ENCODE measurements at regions of chr11 and their contacts with region 1.

Region 1: GRCh38 chr11:68383976-68384501 is 71.6 kb downstream of the LRP5 start:
- DNase-seq: peak; percentile 64
- ATAC-seq: peak; percentile 45
- H3K4me3 Mint-ChIP-seq: no peak overlapping the region
- H3K27ac Mint-ChIP-seq: no peak overlapping the region
- H3K4me1 Mint-ChIP-seq: peaks cover 45% of the 10 kb centered on the region
- H3K27me3 Mint-ChIP-seq: no peaks in the 10 kb centered on the region
- CTCF ChIP-seq: peak; percentile 50

Region 2: DNA sequence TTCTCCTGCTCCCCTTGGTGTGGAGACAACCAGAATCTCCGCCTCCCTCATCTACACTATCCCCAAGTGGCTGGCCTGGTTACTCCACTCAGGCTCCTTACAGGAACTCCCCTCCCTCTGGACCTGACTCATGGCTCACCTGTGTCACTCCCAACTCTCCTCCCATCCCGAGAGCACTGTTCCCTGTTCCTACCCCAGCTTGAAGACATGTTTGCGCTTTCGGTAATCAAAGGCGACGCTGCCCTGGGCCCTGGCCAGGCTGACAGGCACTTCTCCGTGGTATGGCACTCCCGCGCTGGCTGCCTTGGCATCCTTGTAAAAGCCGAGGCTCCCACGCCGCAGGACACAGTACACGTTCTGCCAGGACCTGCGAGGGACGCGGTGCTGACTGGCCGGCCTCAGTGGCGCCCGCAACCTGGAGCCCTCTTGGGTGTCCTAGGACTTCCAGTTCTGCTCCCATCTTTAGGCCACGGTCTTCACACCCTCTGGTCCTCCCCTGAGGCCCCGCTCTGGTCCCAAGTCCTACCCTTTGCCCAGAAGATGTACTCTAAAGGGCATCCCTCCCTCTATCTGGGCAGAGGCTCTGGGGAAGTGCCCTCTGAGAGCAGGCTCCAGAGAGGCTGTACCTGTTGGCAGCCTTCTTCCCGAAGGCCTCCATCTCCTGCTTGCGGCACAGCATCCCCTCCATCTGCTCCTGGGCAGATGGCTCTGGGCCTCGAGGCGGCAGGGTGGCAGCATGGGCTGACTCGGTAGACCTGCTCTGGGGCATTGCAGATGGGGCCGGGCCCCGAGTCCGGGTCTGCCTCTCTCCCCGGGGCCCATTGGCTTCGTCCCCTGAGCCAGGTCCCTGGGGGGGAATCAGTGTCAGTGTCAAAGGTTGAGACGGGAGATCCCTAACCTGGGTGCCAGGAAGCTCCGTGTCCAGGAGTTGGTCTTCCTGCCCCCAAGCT is 1697.0 kb before region 1 on chr11:
- CTCF ChIA-PET with region 1: no interaction called
- POLR2A ChIA-PET with region 1: no interaction called
- intact Hi-C with region 1: no loop called
- DNase-seq: no peak
- ATAC-seq: no peak
- H3K4me3 Mint-ChIP-seq: no peak overlapping the region
- H3K27ac Mint-ChIP-seq: no peak overlapping the region
- H3K4me1 Mint-ChIP-seq: no peaks in the 10 kb centered on the region
- H3K27me3 Mint-ChIP-seq: no peaks in the 10 kb centered on the region
- CTCF ChIP-seq: no peak

Region 3: GRCh38 chr11:68257475-68258362 is 126.3 kb before region 1 on chr11:
- CTCF ChIA-PET with region 1: interaction called, 8 read pairs
- POLR2A ChIA-PET with region 1: interaction called, 4 read pairs
- intact Hi-C with region 1: loop called (anchors 1 kb)
- DNase-seq: peak; percentile 90
- ATAC-seq: peak; percentile 94
- H3K4me3 Mint-ChIP-seq: peak overlapping the region; percentile 52
- H3K27ac Mint-ChIP-seq: peak overlapping the region; percentile 80
- H3K4me1 Mint-ChIP-seq: peaks cover 20% of the 10 kb centered on the region
- H3K27me3 Mint-ChIP-seq: no peaks in the 10 kb centered on the region
- CTCF ChIP-seq: no peak

Region 4: DNA sequence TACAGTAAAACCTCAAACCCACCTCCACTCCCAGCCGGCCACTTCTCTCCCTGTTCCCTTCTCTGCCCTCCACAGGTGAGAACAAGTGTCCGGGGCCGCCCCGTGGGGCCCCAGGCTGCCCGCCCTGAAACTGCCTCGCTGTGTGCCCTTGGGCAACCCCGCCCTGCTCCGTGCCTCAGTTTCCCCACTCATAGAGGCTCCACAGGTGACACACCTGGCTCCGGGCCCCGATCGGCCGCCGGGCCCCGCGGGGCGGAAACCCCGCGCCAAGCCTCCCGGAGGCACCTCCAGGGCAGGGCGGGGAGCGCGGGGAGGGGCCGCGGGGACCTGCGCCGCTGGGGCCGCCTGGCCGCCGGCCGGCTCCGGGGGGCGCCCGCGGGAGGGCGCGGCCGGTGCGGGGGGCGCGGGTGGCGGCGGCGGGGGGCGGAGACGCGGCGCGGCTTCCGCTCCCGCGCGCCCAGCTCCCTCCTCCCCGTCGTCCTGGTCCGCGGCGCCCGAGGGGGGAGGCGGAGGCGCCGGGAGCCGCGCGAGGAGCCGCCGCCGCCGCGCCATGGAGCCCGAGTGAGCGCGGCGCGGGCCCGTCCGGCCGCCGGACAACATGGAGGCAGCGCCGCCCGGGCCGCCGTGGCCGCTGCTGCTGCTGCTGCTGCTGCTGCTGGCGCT is 71.8 kb before region 1 on chr11 and contains the start of gene LRP5:
- CTCF ChIA-PET with region 1: no interaction called
- POLR2A ChIA-PET with region 1: interaction called, 3 read pairs
- intact Hi-C with region 1: loop called (anchors 5 kb)
- DNase-seq: peak; percentile 28
- ATAC-seq: peak; percentile 64
- H3K4me3 Mint-ChIP-seq: peak within 1 kb of the TSS; percentile 83
- H3K27ac Mint-ChIP-seq: no peak within 1 kb of the TSS
- H3K4me1 Mint-ChIP-seq: peaks cover 13% of the 10 kb centered on the region
- H3K27me3 Mint-ChIP-seq: peaks cover 23% of the 10 kb centered on the region
- CTCF ChIP-seq: no peak
- total RNA-seq, gene LRP5: 7.7 and 8.7 TPM in 2 replicates

Region 5: GRCh38 chr11:68498321-68498720 is 114.3 kb after region 1 on chr11:
- CTCF ChIA-PET with region 1: no interaction called
- POLR2A ChIA-PET with region 1: no interaction called
- intact Hi-C with region 1: no loop called
- DNase-seq: no peak
- ATAC-seq: no peak
- H3K4me3 Mint-ChIP-seq: no peak overlapping the region
- H3K27ac Mint-ChIP-seq: no peak overlapping the region
- H3K4me1 Mint-ChIP-seq: peaks cover 93% of the 10 kb centered on the region
- H3K27me3 Mint-ChIP-seq: no peaks in the 10 kb centered on the region
- CTCF ChIP-seq: no peak

Measured in activated B cell treated with CpG ODN at 0.5 μM for 24 hours (primary cell).